WTC11 (cell line): ENCODE measurements at regions of chr1 and their contacts with region 1.

Region 1: GRCh38 chr1:10888286-10888685 is 91.8 kb upstream of the CASZ1 start:
- DNase-seq: peak; percentile 57
- ATAC-seq: peak; percentile 72
- H3K4me3 Mint-ChIP-seq: peak overlapping the region; percentile 68
- H3K27ac Mint-ChIP-seq: no peak overlapping the region
- H3K4me1 Mint-ChIP-seq: peaks cover 17% of the 10 kb centered on the region
- H3K27me3 Mint-ChIP-seq: peaks cover 21% of the 10 kb centered on the region
- CTCF ChIP-seq: no peak

Region 2: GRCh38 chr1:10736634-10737586 is 151.4 kb before region 1 on chr1:
- CTCF ChIA-PET with region 1: no interaction called
- POLR2A ChIA-PET with region 1: no interaction called
- DNase-seq: no peak
- ATAC-seq: no peak
- H3K4me3 Mint-ChIP-seq: no peak overlapping the region
- H3K27ac Mint-ChIP-seq: no peak overlapping the region
- H3K4me1 Mint-ChIP-seq: peaks cover 47% of the 10 kb centered on the region
- H3K27me3 Mint-ChIP-seq: no peaks in the 10 kb centered on the region
- CTCF ChIP-seq: no peak

Region 3: DNA sequence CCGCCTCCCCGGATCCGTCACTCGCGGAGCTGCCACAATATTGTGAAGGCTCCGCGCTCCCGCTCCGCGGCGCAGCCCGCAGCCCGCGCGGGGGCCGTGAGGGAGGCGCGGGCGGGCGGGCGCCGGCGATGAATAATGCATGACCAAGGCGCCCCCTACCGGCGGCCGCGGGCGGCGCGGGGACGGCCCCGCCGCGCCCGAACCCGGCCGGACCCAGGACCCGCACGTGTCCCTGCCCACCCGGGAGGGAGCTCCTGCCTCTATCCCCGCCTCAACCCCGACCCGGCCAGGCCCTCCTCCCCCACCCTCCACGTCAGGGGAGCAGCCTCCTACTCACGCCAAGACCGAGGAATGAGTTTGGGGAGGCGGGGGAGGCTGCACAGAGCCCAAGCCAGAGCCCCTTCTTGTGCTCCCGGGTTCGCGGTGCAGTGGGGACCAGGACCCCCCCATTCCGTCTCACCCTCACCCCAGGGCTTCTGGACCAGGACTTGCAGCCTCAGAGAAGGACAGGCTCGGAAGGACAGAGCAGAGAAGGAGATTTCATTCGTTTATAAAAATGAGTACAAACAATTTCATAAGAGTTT is 21.1 kb before region 1 on chr1:
- CTCF ChIA-PET with region 1: interaction called, 18 read pairs
- POLR2A ChIA-PET with region 1: no interaction called
- DNase-seq: peak; percentile 77
- ATAC-seq: peak; percentile 74
- H3K4me3 Mint-ChIP-seq: peak overlapping the region; percentile 56
- H3K27ac Mint-ChIP-seq: no peak overlapping the region
- H3K4me1 Mint-ChIP-seq: peaks cover 40% of the 10 kb centered on the region
- H3K27me3 Mint-ChIP-seq: peaks cover 40% of the 10 kb centered on the region
- CTCF ChIP-seq: peak; percentile 87; the same call in 1 of the 2 replicates

Region 4: GRCh38 chr1:10901086-10901890 is 13.0 kb after region 1 on chr1:
- CTCF ChIA-PET with region 1: interaction called, 11 read pairs
- POLR2A ChIA-PET with region 1: no interaction called
- DNase-seq: no peak
- ATAC-seq: peak; percentile 12; the same call in 1 of the 2 replicates
- H3K4me3 Mint-ChIP-seq: peak overlapping the region; percentile 3; the same call in 1 of the 2 replicates
- H3K27ac Mint-ChIP-seq: no peak overlapping the region
- H3K4me1 Mint-ChIP-seq: peaks cover 36% of the 10 kb centered on the region
- H3K27me3 Mint-ChIP-seq: no peaks in the 10 kb centered on the region; the same call in 1 of the 2 replicates
- CTCF ChIP-seq: no peak

Region 5: GRCh38 chr1:10909697-10910671 is 21.7 kb after region 1 on chr1:
- CTCF ChIA-PET with region 1: interaction called, 15 read pairs
- POLR2A ChIA-PET with region 1: no interaction called
- DNase-seq: peak; percentile 92
- ATAC-seq: peak; percentile 87
- H3K4me3 Mint-ChIP-seq: no peak overlapping the region
- H3K27ac Mint-ChIP-seq: no peak overlapping the region
- H3K4me1 Mint-ChIP-seq: peaks cover 26% of the 10 kb centered on the region
- H3K27me3 Mint-ChIP-seq: no peaks in the 10 kb centered on the region; the same call in 1 of the 2 replicates
- CTCF ChIP-seq: peak; percentile 71; the same call in 1 of the 2 replicates

Region 6: DNA sequence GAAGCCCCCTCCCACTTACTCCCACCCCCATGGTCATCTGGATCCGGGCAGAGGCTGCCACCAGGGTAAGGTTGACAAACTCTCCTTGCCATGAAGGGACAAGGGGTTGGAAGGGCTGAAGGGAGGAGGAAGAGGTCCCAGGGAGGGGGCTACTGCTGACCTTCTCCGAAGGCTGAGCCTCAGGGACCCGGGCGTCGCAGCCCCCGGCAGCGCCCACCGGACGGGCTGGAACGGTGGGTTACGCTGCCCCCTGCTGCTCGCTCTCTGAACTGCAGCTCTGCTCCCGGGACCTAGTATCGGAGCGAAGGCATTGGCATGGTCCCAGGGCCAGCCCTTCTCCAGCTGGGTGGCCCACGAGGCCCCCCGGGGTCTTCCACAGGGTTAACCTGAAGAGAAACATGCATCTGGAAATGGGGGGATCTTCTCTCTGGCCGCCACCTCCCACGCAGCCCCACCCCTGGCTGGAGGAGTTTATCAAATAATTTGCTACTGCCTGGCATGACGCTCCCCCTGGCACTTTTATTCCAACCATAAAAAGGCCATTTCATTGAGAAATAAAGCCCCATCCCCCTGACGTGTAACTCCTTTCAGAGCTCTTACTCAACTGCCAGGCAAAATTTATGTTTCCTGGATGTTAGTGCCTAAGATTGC is 53.7 kb after region 1 on chr1:
- CTCF ChIA-PET with region 1: interaction called, 11 read pairs
- POLR2A ChIA-PET with region 1: no interaction called
- DNase-seq: peak; percentile 86
- ATAC-seq: peak; percentile 73
- H3K4me3 Mint-ChIP-seq: no peak overlapping the region; the same call in 1 of the 2 replicates
- H3K27ac Mint-ChIP-seq: no peak overlapping the region
- H3K4me1 Mint-ChIP-seq: peaks cover 26% of the 10 kb centered on the region
- H3K27me3 Mint-ChIP-seq: peaks cover 8% of the 10 kb centered on the region
- CTCF ChIP-seq: peak; percentile 96